ENCODE measurements at regions of chr6 and their contacts with region 1.

Region 1: DNA sequence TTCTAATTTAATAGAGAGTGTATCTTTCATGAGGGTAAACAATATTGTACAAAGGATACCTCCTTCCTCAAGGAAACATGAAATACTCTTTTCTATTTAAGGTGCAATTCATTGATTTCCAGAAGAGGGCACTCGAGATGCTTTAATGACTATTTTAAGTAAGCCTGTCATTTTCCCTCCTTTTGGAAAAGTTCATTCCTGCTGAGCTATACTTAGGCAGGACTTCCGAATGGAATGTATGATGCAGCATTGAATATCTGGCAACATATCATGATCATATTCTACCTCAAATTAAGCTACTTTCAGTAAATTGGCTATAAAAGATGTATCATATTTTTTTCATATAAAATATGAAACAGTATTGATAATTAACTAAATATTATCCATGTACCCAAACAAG is 5.0 kb downstream of the DST start:
- H3K4me3 ChIP-seq: no peak overlapping the region
- H3K27ac ChIP-seq: no peak overlapping the region
- H3K4me1 ChIP-seq: no peaks in the 10 kb centered on the region
- CTCF ChIP-seq: 0 out of 2 replicates have a peak, but pooled peaks have one; percentile 13

Region 2: GRCh38 chr6:56652994-56653393 is 15.4 kb after region 1 on chr6:
- CTCF ChIA-PET with region 1: interaction called, 12 read pairs
- POLR2A ChIA-PET with region 1: no interaction called
- H3K4me3 ChIP-seq: no peak overlapping the region
- H3K27ac ChIP-seq: peak overlapping the region; percentile 21; the same call in 1 of the 2 replicates
- H3K4me1 ChIP-seq: peaks cover 54% of the 10 kb centered on the region
- CTCF ChIP-seq: no peak

Region 3: GRCh38 chr6:56693246-56693607 is 55.6 kb after region 1 on chr6:
- CTCF ChIA-PET with region 1: interaction called, 87 read pairs
- POLR2A ChIA-PET with region 1: no interaction called
- H3K4me3 ChIP-seq: no peak overlapping the region
- H3K27ac ChIP-seq: 0 out of 2 replicates have a peak overlapping the region, but pooled peaks have one; percentile 8
- H3K4me1 ChIP-seq: peaks cover 29% of the 10 kb centered on the region
- CTCF ChIP-seq: no peak

Region 4: DNA sequence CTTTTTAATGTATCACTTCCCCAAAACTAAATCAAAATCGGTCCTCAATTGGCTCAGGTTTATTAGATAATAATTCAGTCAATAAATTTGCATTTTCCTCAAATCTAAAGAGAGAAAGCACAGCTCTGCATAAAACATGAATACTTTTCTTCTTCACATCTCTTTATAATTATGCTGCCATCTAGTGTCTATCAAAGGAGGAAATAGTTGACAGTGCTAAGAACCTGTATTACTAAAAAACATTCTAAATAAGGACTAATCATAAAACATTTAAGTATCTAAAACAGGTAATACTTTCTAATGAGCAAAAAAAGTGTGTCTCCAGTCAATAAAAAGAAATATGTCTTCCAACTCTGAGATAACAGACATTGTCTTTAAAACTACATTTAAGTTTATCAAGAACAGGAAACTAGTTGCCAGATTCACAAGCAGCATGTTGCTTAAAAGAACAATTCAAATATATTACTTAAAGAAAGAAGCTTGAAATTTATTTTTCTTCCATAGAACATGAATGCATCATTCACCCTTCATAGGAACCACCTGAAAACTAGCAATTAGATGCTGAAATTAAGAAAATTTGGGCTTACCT is 61.5 kb after region 1 on chr6:
- CTCF ChIA-PET with region 1: interaction called, 87 read pairs
- POLR2A ChIA-PET with region 1: no interaction called
- H3K4me3 ChIP-seq: no peak overlapping the region
- H3K27ac ChIP-seq: no peak overlapping the region
- H3K4me1 ChIP-seq: no peaks in the 10 kb centered on the region
- CTCF ChIP-seq: no peak

Region 5: DNA sequence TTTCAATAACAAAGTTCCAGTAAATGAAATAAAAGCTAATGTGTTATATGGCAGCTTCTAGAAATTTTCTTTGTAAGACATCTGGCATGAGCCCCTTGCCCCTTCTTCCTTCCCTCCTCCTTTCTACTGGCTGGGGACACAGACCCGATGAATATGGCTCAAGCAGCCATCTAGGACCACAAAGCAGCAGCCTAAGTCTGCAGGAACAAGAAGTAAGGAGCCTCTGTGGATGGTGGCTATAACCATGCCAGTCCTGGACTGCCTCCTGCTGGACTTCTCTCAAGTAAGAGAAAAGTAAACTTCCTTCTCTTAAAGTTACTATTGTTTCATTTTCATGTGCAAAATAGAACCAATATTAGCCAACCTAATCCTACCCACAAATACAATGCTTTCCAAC is 119.9 kb after region 1 on chr6:
- CTCF ChIA-PET with region 1: interaction called, 19 read pairs
- POLR2A ChIA-PET with region 1: no interaction called
- H3K4me3 ChIP-seq: no peak overlapping the region
- H3K27ac ChIP-seq: no peak overlapping the region
- H3K4me1 ChIP-seq: peaks cover 11% of the 10 kb centered on the region; the same call in 1 of the 2 replicates
- CTCF ChIP-seq: peak; percentile 44; the same call in 1 of the 2 replicates

Region 6: DNA sequence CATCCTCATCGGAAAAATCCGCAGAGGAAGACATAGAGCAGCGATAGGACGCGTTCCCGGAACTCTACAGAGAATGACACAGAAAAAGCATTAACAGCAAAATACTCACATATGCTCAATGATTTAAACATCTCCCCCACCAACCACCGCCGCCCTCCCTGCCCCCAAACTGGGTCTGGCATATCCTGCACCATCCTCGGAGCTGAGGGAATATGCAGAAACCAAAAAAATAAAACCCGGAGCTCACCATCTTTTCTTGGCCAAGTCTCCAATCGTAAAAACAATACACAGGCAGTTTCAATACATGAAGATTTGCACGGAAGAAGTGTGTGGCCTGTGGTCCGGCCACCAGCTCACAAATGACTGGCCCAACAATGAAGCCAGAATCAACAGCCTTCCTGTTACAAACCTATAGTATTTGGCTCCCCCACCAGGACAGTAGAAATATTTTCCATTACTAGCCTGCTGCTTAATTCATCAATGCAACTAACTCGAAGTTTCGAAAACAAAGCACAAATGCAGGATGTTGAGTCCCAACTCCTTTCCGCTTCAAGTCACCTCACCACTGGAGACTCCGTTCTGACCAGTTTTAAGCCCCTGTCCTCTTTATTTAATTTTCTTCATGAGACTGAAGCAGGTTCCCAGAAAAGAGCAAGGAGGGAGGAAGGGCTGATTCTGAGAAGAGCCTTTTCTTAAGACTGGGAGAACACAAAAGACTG is 214.1 kb after region 1 on chr6:
- CTCF ChIA-PET with region 1: interaction called, 46 read pairs
- POLR2A ChIA-PET with region 1: interaction called, 3 read pairs
- H3K4me3 ChIP-seq: peak overlapping the region; percentile 43
- H3K27ac ChIP-seq: no peak overlapping the region
- H3K4me1 ChIP-seq: peaks cover 18% of the 10 kb centered on the region
- CTCF ChIP-seq: peak; percentile 57; the same call in 1 of the 2 replicates